Sigmoid colon (tissue), 7 donors: ENCODE measurements at regions of chr11 and their contacts with region 1.

Region 1: DNA sequence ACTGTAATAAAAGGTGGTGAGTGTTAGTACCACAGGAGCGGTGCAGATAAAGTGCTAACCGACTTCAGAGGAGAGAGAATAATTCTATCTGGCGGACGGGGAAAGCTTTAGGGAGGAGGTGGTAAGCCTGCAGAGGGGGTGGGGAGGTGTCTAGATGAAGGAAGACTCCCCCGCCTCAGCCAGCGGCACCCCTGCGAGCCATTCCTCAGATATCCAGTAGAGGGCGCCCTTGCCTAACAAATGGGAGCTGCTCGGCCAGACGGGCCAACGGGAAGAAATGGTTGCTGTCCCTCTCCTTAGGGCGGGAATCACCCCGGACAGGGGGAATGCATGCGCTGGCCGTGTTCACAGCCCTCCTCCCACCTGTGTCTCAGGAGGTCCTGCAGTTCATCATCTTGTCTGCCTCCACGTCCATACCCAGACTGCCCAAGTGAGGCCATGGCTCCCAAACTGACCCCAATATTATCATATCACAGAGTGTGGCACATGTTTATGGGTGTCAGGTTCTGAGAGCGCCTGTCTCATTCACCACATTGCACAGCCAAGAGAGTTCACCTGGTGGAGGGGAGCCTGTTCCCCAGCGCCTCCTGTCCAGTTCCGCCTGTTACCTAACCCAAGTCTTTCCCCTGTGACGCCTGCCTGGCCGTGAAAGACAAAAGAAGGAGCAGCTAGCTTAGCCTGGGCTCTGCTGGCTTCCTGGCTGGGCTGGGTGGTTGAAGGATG is 85.5 kb downstream of the ST3GAL4 start:
- DNase-seq: peak; percentile 86
- H3K4me3 ChIP-seq: no peak overlapping the region
- H3K27ac ChIP-seq: no peak overlapping the region
- H3K4me1 ChIP-seq: peaks cover 0 to 7% (median 0%) of the 10 kb centered on the region in 4 donors
- H3K27me3 ChIP-seq: peaks cover 0 to 8% (median 0%) of the 10 kb centered on the region in 3 donors
- CTCF ChIP-seq: peak; percentile 91 to 97 (median 94)
- EP300 ChIP-seq: no peak
- POLR2A ChIP-seq: no peak

Region 2: GRCh38 chr11:126332131-126332711 is 108.7 kb before region 1 on chr11:
- intact Hi-C with region 1: no loop called
- DNase-seq: no peak
- H3K4me3 ChIP-seq: no peak overlapping the region
- H3K27ac ChIP-seq: peak overlapping the region in 1 of 4 donors; percentile 1
- H3K4me1 ChIP-seq: peaks cover 0 to 13% (median 9%) of the 10 kb centered on the region in 4 donors
- H3K27me3 ChIP-seq: no peaks in the 10 kb centered on the region
- CTCF ChIP-seq: no peak
- EP300 ChIP-seq: no peak
- POLR2A ChIP-seq: no peak

Region 3: GRCh38 chr11:126391970-126392639 is 48.8 kb before region 1 on chr11:
- intact Hi-C with region 1: no loop called
- DNase-seq: no peak
- H3K4me3 ChIP-seq: no peak overlapping the region
- H3K27ac ChIP-seq: peak overlapping the region in 3 of 4 donors; percentile 1 to 30 (median 25)
- H3K4me1 ChIP-seq: peaks cover 0 to 26% (median 21%) of the 10 kb centered on the region in 4 donors
- H3K27me3 ChIP-seq: no peaks in the 10 kb centered on the region
- CTCF ChIP-seq: no peak
- EP300 ChIP-seq: no peak
- POLR2A ChIP-seq: no peak

Region 4: DNA sequence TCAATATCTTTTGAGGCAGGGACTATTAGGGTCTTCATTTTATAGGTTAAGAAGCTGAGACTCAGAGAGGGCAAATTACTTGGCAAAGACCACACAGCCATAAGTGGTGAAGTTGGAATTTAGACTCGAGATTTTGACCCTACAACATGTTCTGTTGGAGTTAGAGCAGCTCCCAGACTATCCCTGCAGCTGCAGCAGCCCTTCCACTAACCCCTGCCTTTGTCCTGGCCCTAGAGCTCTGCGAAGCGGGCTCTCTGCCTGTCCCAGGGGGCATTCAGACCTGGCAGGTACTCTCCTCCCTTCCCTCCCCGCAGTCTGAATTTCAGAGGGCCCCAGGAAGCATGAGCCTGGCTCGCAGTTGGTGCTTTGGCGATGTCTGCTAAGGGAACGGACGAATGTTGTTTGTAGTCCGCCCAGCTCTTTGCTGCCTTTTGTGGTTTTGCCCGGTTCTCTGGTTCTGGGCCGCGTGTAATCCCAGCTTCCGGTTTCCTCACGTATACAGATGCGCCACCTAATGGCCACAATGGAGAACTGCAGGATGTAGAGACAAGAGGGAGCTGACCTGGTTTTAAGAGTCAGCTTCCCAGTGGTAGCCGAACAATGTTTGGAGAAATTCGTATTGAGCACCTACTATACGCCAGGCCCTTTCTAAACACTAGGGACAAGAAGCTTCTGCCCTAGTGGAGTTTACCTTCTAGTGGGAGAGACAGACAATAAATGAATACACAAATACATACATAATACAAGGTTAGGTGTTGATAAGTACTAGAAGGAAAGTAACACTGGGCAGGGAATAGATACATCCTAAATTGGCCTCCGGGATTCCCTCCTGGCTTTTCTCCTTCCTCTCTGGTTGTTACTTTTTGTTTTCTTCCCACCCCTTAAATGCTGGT is 39.7 kb after region 1 on chr11:
- intact Hi-C with region 1: loop called (anchors 1 kb)
- DNase-seq: peak; percentile 93
- H3K4me3 ChIP-seq: peak overlapping the region in 1 of 4 donors; percentile 6
- H3K27ac ChIP-seq: peak overlapping the region; percentile 70 to 78 (median 74)
- H3K4me1 ChIP-seq: peaks cover 0 to 25% (median 11%) of the 10 kb centered on the region in 4 donors
- H3K27me3 ChIP-seq: no peaks in the 10 kb centered on the region
- CTCF ChIP-seq: peak; percentile 89 to 95 (median 94)
- EP300 ChIP-seq: no peak
- POLR2A ChIP-seq: no peak

Region 5: DNA sequence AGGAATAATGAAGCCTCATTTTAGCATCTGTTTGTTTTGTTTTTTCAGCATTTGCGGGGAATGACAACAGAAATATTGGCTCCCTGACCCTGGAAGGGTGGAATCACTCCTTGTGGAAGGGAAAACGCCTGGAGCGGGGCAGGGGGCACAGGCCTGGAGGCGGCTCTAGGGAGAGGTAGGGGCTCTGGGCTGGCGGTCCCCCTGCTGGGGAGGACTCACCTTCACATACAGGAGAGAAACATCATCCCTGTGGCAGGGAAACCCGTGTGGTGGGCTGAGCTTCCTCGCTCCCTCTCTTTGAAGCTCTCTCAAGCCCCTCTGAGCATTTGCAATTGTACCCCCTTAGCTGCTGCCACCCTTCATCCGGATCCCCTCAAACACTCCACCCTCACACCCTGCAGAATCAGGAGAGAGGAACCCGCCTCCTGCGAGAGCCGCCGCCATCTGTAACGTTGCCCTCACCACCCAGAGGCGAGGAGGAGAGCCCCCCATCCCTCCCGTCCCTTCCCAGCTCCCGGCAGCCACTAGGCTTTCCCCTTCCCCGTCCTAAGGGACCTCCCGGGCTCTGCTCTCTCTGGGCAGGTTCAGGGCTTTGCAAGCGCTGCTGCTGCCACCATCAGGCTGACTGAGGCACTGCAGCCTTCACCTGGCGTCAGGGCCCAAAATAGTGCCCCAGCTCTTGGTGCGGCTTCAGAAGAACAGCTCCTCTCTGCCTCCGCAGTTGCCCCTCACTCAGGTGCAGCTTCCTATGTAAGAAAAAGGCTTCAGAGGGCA is 549.2 kb after region 1 on chr11:
- intact Hi-C with region 1: loop called (anchors 1 kb)
- DNase-seq: peak; percentile 76
- H3K4me3 ChIP-seq: no peak overlapping the region
- H3K27ac ChIP-seq: no peak overlapping the region
- H3K4me1 ChIP-seq: no peaks in the 10 kb centered on the region
- H3K27me3 ChIP-seq: peaks cover 0 to 10% (median 0%) of the 10 kb centered on the region in 3 donors
- CTCF ChIP-seq: peak; percentile 57 to 91 (median 83)
- EP300 ChIP-seq: no peak
- POLR2A ChIP-seq: no peak

Region 6: GRCh38 chr11:127345819-127346459 is 905.0 kb after region 1 on chr11:
- intact Hi-C with region 1: loop called (anchors 2 kb)
- DNase-seq: no peak
- H3K4me3 ChIP-seq: no peak overlapping the region
- H3K27ac ChIP-seq: no peak overlapping the region
- H3K4me1 ChIP-seq: no peaks in the 10 kb centered on the region
- H3K27me3 ChIP-seq: peaks cover 0 to 5% (median 0%) of the 10 kb centered on the region in 3 donors
- CTCF ChIP-seq: peak in 3 of 4 experiments; percentile 21 to 55 (median 33)
- EP300 ChIP-seq: no peak
- POLR2A ChIP-seq: no peak